Aorta (tissue), 5 donors: ENCODE measurements at regions of chr12 and their contacts with region 1.

Region 1: DNA sequence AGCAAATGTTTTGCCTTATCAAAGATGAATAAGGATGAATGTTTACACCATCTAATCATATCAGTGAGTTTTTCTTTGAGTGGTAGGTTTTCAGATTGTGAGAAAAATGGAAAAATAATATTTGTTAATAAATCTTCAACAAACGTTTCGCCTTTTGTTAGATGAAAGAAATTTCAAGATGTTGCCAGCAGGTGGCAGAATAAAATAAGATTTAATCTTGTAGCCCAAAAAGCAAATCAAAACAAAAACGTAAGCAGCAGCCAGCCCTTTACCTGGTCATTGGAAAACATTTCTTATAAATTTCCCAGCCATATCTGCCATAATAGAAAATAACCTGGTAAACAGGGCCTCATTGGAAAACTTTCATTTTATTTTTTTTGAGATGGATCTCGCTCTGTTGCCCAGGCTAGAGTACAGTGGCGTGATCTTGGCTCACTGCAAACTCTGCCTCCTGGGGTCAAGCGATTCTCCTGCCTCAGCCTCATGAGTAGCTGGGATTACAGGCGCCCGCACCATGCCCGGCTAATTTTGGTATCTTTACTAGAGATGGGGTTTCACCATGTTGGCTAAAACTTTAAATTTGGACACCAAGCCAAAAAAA is 15.4 kb upstream of the TMEM120B start:
- DNase-seq: no peak
- ATAC-seq: no peak
- H3K4me3 ChIP-seq: no peak overlapping the region
- H3K27ac ChIP-seq: no peak overlapping the region
- H3K4me1 ChIP-seq: peaks cover 0 to 2% of the 10 kb centered on the region in 2 donors
- H3K27me3 ChIP-seq: no peaks in the 10 kb centered on the region

Region 2: GRCh38 chr12:121773011-121773777 is 76.0 kb after region 1 on chr12:
- intact Hi-C with region 1: loop called (anchors 1 to 2 kb)
- DNase-seq: peak; percentile 79 to 90
- ATAC-seq: peak; percentile 73
- H3K4me3 ChIP-seq: no peak overlapping the region
- H3K27ac ChIP-seq: no peak overlapping the region
- H3K4me1 ChIP-seq: no peaks in the 10 kb centered on the region
- H3K27me3 ChIP-seq: no peaks in the 10 kb centered on the region

Region 3: GRCh38 chr12:121894633-121895032 is 197.4 kb after region 1 on chr12:
- intact Hi-C with region 1: loop called in 1 of 2 experiments (anchors 10 kb)
- DNase-seq: no peak
- ATAC-seq: no peak
- H3K4me3 ChIP-seq: no peak overlapping the region
- H3K27ac ChIP-seq: no peak overlapping the region
- H3K4me1 ChIP-seq: peaks cover 0 to 7% of the 10 kb centered on the region in 2 donors
- H3K27me3 ChIP-seq: no peaks in the 10 kb centered on the region